ENCODE measurements at regions of chr17 and their contacts with region 1.

Region 1: DNA sequence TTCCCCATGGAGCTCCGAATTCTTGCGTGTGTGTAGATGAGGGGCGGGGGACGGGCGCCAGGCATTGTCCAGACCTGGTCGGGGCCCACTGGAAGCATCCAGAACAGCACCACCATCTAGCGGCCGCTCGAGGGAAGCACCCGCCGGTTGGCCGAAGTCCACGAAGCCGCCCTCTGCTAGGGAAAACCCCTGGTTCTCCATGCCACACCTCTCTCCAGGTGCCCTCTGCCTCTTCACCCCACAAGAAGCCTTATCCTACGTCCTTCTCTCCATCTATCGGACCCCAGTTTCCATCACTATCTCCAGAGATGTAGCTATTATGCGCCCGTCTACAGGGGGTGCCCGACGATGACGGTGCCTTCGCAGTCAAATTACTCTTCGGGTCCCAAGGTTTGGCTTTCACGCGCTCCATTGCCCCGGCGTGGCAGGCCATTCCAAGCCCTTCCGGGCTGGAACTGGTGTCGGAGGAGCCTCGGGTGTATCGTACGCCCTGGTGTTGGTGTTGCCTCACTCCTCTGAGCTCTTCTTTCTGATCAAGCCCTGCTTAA is 617 bp upstream of the SENP3 start:
- DNase-seq: peak; percentile 60 to 89 (median 78)
- ATAC-seq: peak; percentile 62 to 69
- H3K4me3 Mint-ChIP-seq: peak overlapping the region; percentile 88 to 98 (median 94)
- H3K27ac Mint-ChIP-seq: peak overlapping the region; percentile 83 to 99 (median 97)
- H3K4me1 Mint-ChIP-seq: peaks cover 31 to 59% (median 55%) of the 10 kb centered on the region in 4 donors
- H3K27me3 Mint-ChIP-seq: no peaks in the 10 kb centered on the region

Region 2: DNA sequence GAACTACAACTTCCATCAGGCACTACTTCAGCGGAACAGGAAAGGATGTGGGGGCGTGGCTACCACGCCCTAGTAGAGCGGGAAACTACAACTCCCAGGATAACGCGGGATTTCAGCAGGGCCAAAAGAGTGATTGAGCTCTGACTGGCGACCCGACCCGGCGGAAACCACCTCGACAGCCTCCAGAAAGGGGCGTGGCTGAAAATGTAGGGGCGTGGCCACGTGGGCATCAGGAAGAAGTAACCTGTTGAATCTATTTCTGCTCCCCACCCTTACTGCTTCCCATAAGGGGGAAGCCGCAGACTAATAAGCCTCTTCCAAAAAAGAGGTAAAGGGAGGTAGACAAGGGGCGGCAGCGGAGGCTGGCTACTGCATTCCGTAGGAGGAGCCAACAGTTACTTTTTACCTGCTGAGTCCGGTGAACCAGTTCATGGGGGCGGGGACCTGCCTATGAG is 125.9 kb before region 1 on chr17 and contains the start of gene TMEM102:
- POLR2A ChIA-PET with region 1: interaction called, 15 read pairs
- DNase-seq: peak; percentile 94 to 99 (median 98)
- ATAC-seq: peak; percentile 74 to 82
- H3K4me3 Mint-ChIP-seq: peak within 1 kb of the TSS; percentile 90 to 98 (median 95)
- H3K27ac Mint-ChIP-seq: peak within 1 kb of the TSS; percentile 91 to 99 (median 98)
- H3K4me1 Mint-ChIP-seq: peaks cover 20 to 45% (median 37%) of the 10 kb centered on the region in 4 donors
- H3K27me3 Mint-ChIP-seq: peaks cover 3 to 18% (median 9%) of the 10 kb centered on the region in 5 donors
- polyA plus RNA-seq, gene TMEM102: 9.8 to 19.1 (median 12.1) TPM

Region 3: DNA sequence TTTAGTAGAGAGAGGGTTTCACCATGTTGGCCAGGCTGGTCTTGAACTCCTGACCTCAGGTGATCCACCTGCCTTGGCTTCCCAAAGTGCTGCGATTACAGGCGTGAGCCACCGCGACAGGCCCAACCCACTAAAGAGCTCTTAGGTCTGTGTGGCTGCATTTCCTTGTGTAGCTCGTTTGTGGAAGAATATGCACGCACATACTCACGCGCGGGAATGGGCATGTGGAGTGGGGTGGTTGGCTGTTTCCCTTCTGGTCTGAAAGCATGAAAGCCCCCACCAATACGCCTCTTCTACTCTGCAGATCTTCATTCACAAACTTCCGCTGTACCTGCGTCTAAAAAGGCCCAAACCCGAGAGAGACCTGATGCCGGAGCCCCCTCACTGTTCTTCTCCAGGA is 106.1 kb before region 1 on chr17:
- POLR2A ChIA-PET with region 1: interaction called, 14 read pairs
- DNase-seq: no peak
- ATAC-seq: peak in 1 of 2 donors; percentile 55
- H3K4me3 Mint-ChIP-seq: peak overlapping the region; percentile 87 to 99 (median 96)
- H3K27ac Mint-ChIP-seq: peak overlapping the region; percentile 86 to 98 (median 92)
- H3K4me1 Mint-ChIP-seq: peaks cover 19 to 45% (median 23%) of the 10 kb centered on the region in 4 donors
- H3K27me3 Mint-ChIP-seq: no peaks in the 10 kb centered on the region

Region 4: GRCh38 chr17:7515911-7516610 is 45.0 kb before region 1 on chr17:
- POLR2A ChIA-PET with region 1: interaction called, 31 read pairs
- DNase-seq: no peak
- ATAC-seq: no peak
- H3K4me3 Mint-ChIP-seq: no peak overlapping the region
- H3K27ac Mint-ChIP-seq: peak overlapping the region in 1 of 10 donors; percentile 58
- H3K4me1 Mint-ChIP-seq: peaks cover 0 to 2% (median 0%) of the 10 kb centered on the region in 4 donors
- H3K27me3 Mint-ChIP-seq: no peaks in the 10 kb centered on the region

Region 5: DNA sequence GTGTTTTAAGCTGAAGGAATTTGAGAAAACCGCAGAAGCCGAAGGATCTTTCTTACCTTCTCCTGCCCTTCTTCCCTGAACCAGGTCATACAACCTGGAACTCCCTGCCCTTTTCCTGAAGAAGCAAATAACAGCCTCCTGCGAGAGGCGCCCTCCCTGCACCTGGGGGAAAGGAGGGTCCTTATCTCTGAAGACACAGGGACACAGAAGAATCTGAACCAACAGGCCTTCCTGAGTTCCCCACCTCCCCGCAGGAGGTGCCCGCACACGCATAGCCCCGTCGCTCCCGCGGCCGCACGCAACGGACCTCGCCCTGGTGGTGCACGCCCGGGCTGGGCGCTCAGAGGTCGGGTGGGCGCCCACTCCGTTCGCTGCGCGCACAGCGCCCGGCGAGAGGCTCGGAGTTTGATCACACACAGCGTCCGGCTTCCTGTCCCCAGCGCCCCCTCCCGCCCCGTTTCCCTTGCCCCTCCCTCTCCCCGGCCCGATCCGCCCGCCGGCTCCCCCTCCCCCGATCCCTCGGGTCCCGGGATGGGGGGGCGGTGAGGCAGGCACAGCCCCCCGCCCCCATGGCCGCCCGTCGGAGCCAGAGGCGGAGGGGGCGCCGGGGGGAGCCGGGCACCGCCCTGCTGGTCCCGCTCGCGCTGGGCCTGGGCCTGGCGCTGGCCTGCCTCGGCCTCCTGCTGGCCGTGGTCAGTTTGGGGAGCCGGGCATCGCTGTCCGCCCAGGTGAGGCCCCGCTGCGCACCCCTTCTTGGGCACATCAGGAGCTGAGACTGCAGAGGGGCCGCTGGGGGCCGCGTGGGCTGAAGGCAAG is 12.3 kb before region 1 on chr17 and contains the start of gene TNFSF12:
- POLR2A ChIA-PET with region 1: interaction called, 17 read pairs
- DNase-seq: peak in 8 of 10 donors; percentile 34 to 79 (median 52)
- ATAC-seq: peak; percentile 33 to 71
- H3K4me3 Mint-ChIP-seq: peak within 1 kb of the TSS; percentile 72 to 92 (median 88)
- H3K27ac Mint-ChIP-seq: peak within 1 kb of the TSS; percentile 66 to 96 (median 94)
- H3K4me1 Mint-ChIP-seq: peaks cover 28 to 57% (median 54%) of the 10 kb centered on the region in 4 donors
- H3K27me3 Mint-ChIP-seq: no peaks in the 10 kb centered on the region
- polyA plus RNA-seq, gene TNFSF12: 19.3 to 28.6 (median 25.8) TPM

Region 6: DNA sequence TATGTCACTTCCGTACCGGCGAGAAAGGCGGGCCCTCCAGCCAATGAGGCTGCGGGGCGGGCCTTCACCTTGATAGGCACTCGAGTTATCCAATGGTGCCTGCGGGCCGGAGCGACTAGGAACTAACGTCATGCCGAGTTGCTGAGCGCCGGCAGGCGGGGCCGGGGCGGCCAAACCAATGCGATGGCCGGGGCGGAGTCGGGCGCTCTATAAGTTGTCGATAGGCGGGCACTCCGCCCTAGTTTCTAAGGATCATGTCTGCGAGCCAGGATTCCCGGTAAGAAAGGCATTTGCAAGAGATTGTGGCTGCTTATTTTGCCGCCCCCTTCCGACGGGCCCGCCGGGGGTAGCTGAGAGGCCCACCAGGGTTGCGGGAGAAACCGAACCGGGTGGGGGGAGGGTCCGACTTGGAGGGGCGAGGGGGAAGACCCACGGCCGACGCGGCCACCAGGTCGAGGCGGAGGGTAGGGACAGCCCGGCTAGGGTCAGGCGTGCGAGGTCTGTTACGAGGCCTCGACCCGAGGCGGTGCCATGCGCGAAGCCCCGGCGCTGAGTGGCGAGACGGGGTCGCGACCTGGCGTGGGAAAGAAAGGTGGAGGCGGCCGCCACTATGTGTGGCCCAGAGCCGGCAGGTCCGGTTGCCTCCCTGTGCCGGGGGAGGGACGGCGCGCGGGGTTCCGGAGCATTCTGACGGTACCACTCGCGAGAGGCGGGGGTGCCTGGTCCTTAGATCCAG is 11.7 kb after region 1 on chr17:
- POLR2A ChIA-PET with region 1: interaction called, 37 read pairs
- DNase-seq: peak; percentile 97 to 100 (median 100)
- ATAC-seq: peak; percentile 12 to 85
- H3K4me3 Mint-ChIP-seq: peak overlapping the region; percentile 91 to 100 (median 98)
- H3K27ac Mint-ChIP-seq: peak overlapping the region; percentile 95 to 100 (median 99)
- H3K4me1 Mint-ChIP-seq: peaks cover 19 to 51% (median 44%) of the 10 kb centered on the region in 4 donors
- H3K27me3 Mint-ChIP-seq: no peaks in the 10 kb centered on the region

Region 7: DNA sequence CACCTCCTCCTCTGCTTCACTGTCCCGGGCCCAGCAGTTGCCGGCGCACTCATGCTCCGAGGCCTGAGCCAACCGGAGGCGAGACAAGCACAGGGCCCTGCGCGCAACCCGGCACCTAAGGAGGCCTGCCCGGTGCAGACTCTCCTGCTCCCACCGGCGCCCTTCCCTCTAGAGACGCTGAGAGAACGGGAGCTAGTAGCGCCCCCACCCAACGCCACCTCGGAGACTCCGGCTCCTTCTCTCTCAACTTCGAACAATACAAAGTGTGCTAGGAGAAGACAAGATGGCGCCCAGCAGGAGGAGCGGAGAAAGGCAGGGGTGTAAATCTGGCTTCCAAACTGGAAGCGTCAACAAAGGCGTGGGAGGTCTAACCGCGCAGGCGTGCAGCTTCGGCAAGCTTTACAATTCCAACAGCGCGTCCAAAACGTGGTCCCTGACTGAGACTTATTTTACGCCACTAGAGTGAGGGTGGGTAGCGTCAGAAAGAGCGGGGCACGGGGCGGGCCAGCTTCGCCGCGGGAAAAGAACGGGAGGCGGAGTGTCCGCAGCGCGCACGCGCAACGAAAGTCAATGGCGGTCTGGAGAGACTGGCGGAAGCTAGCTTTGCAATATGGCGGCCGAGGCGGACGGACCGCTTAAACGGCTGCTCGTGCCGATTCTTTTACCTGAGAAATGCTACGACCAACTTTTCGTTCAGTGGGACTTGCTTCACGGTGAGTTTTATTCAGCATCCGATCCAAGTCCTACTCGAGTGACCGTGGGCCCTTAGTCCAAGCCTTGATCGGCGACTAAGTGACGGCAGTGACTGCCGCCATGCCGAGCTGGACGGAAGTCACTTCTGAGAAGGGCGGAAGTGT is 22.4 kb after region 1 on chr17 and contains the start of gene MPDU1:
- POLR2A ChIA-PET with region 1: interaction called, 14 read pairs
- DNase-seq: peak; percentile 91 to 98 (median 95)
- ATAC-seq: peak; percentile 84 to 89
- H3K4me3 Mint-ChIP-seq: peak within 1 kb of the TSS; percentile 88 to 100 (median 99)
- H3K27ac Mint-ChIP-seq: peak within 1 kb of the TSS; percentile 96 to 100 (median 100)
- H3K4me1 Mint-ChIP-seq: peaks cover 30 to 69% (median 61%) of the 10 kb centered on the region in 4 donors
- H3K27me3 Mint-ChIP-seq: no peaks in the 10 kb centered on the region
- polyA plus RNA-seq, gene MPDU1: 33.9 to 48.9 (median 41.3) TPM

Measured in naive thymus-derived CD8-positive, alpha-beta T cell (primary cell).